ENCODE measurements at regions of chr6 and their contacts with region 1.

Region 1: DNA sequence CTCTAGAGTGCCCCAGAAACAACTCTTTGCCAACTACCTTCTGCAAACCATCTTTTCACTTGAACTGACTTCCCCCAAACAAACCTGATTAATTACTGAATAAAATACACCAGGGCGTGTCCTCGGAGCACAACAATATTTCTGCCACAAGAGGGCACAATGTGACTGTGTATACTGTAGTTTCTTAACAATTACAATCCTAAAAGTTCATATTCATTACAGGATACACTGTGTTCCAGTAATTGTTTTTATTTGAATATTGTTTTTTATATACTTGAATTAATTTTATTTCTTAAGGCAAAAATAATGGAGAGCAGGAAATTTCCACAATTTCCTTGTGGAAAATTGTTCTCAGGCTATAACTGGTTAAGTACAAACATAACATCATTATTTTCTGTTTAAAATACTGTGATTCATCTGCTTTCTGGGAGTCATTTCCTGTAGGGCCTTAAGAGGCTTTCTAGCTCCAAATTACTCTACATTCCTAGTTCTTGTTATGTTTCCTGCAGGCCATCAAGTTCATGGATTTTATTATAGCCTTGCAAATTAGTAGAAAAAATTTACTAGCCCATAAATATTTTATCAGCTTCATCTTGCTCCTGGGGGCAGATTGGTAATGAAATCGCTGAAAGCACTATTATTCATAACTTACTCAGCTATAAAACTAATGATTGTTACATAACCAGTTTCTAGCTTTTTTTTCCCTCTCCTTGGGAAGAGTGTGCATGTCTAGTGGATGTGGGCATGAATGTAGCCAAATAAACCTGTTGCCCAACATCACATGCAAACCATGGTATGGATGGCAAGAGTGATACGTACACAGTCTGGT is 51.9 kb upstream of the SLC22A16 start:
- DNase-seq: peak; percentile 57
- H3K4me3 Mint-ChIP-seq: no peak overlapping the region
- H3K27ac Mint-ChIP-seq: no peak overlapping the region
- H3K4me1 Mint-ChIP-seq: peaks cover 4% of the 10 kb centered on the region
- H3K27me3 Mint-ChIP-seq: no peaks in the 10 kb centered on the region

Region 2: GRCh38 chr6:110589865-110590513 is 61.7 kb after region 1 on chr6:
- CTCF ChIA-PET with region 1: interaction called, 8 read pairs
- POLR2A ChIA-PET with region 1: no interaction called
- intact Hi-C with region 1: loop called (anchors 2 kb)
- DNase-seq: peak; percentile 26
- H3K4me3 Mint-ChIP-seq: no peak overlapping the region
- H3K27ac Mint-ChIP-seq: no peak overlapping the region
- H3K4me1 Mint-ChIP-seq: peaks cover 18% of the 10 kb centered on the region
- H3K27me3 Mint-ChIP-seq: no peaks in the 10 kb centered on the region

Region 3: DNA sequence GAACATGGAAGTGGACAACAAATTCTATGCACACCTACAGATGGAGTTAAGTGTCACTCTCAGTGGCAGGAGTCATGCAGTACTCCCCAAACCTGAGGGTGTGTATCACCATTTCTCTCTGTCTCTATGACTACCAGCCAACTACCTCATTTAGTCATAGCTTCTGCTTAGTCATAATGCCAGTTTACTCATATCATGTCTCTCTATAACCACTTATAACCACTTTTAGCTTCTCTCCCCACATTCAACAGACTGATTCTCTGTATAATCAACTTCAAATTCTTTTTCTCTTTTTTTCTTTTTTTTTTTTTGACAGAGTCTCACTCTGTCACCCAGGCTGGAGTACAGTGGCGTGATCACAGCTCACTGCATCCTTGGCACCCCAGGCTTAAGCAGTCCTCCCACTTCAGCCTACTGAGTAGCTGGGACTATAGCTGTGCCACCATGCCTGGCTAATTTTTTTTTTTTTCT is 416.4 kb after region 1 on chr6:
- CTCF ChIA-PET with region 1: interaction called, 6 read pairs
- POLR2A ChIA-PET with region 1: interaction called, 5 read pairs
- intact Hi-C with region 1: loop called (anchors 1 kb)
- DNase-seq: peak; percentile 71
- H3K4me3 Mint-ChIP-seq: peak overlapping the region; percentile 16
- H3K27ac Mint-ChIP-seq: peak overlapping the region; percentile 71
- H3K4me1 Mint-ChIP-seq: peaks cover 10% of the 10 kb centered on the region
- H3K27me3 Mint-ChIP-seq: no peaks in the 10 kb centered on the region

Region 4: DNA sequence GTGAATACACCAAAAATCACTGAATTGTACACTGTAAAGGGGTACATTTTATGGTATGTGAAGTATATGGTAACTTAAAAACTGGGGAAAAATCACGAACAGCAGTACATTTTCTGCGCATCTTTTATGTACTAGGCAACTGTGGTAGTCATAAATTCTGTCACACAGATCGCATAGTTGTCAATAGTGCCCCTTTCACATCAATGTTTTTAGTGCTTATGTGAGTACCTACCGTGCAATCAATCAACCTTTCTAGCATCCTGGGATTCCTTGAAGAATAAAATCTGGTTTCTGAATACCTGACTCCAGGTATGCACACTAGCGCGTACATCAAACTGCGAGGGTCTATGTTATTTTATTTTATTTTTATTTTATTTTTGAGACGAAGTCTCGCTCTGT is 452.9 kb after region 1 on chr6:
- CTCF ChIA-PET with region 1: interaction called, 3 read pairs
- POLR2A ChIA-PET with region 1: no interaction called
- intact Hi-C with region 1: loop called (anchors 1 kb)
- DNase-seq: no peak
- H3K4me3 Mint-ChIP-seq: peak overlapping the region; percentile 98
- H3K27ac Mint-ChIP-seq: peak overlapping the region; percentile 97
- H3K4me1 Mint-ChIP-seq: peaks cover 50% of the 10 kb centered on the region
- H3K27me3 Mint-ChIP-seq: no peaks in the 10 kb centered on the region

Region 5: GRCh38 chr6:111210194-111210728 is 681.9 kb after region 1 on chr6:
- CTCF ChIA-PET with region 1: interaction called, 4 read pairs
- POLR2A ChIA-PET with region 1: no interaction called
- intact Hi-C with region 1: loop called (anchors 5 kb)
- DNase-seq: peak; percentile 11
- H3K4me3 Mint-ChIP-seq: no peak overlapping the region
- H3K27ac Mint-ChIP-seq: no peak overlapping the region
- H3K4me1 Mint-ChIP-seq: no peaks in the 10 kb centered on the region
- H3K27me3 Mint-ChIP-seq: no peaks in the 10 kb centered on the region